ENCODE measurements at regions of chr12 and their contacts with region 1.

Region 1: GRCh38 chr12:57452937-57453509 is 2.1 kb upstream of the INHBE start:
- H3K4me3 ChIP-seq: no peak overlapping the region
- H3K27ac ChIP-seq: no peak overlapping the region
- H3K4me1 ChIP-seq: peaks cover 7% of the 10 kb centered on the region; the same call in 1 of the 2 replicates
- CTCF ChIP-seq: peak; percentile 85

Region 2: DNA sequence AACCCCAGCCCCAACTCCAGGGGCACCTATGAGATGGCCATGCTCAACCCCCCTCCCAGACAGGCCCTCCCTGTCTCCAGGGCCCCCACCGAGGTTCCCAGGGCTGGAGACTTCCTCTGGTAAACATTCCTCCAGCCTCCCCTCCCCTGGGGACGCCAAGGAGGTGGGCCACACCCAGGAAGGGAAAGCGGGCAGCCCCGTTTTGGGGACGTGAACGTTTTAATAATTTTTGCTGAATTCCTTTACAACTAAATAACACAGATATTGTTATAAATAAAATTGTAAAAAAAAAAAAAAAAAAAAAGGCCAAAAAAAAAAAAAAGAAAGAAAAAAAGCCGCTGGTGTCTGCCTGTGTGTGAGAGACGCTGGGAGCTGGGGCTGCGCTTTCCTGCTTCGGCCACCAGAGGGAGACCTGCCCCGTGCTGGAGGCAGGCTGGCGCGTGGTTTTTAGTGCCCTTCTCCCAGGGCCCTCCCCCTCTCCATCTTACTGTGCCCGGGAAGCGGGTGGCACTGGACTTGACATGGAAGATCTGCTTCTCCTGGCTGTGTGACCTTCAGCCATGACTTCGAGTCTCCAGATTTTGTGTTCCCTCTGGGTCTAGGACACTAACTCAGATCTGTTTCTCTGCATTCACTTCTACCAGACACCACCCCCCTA is 239.8 kb before region 1 on chr12:
- CTCF ChIA-PET with region 1: interaction called, 75 read pairs
- POLR2A ChIA-PET with region 1: no interaction called
- H3K4me3 ChIP-seq: no peak overlapping the region
- H3K27ac ChIP-seq: no peak overlapping the region
- H3K4me1 ChIP-seq: peaks cover 5% of the 10 kb centered on the region
- CTCF ChIP-seq: peak; percentile 81

Region 3: DNA sequence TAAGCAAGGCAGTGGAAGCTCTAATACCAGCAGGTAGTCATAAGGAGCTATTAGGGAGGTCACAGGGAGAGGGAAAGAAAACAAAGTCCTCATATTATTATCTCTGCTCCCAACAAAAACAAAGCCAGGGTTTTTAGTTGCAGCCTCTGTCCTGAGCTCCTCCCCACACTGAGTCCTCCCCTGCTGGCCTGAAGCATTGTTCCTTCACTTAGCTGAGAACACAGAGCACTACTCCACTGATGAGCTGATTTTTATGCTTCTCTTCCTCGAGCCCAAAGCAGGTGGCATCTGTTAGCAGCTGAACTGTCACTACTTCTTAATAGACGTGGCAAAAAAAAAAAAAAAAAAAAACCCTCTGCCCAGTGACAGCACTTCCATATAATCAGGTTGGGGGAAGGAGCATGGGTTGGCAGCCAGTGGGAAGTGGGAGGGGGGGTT is 191.6 kb before region 1 on chr12:
- CTCF ChIA-PET with region 1: interaction called, 151 read pairs
- POLR2A ChIA-PET with region 1: interaction called, 5 read pairs
- H3K4me3 ChIP-seq: no peak overlapping the region
- H3K27ac ChIP-seq: no peak overlapping the region
- H3K4me1 ChIP-seq: peaks cover 13% of the 10 kb centered on the region; the same call in 1 of the 2 replicates
- CTCF ChIP-seq: no peak

Region 4: DNA sequence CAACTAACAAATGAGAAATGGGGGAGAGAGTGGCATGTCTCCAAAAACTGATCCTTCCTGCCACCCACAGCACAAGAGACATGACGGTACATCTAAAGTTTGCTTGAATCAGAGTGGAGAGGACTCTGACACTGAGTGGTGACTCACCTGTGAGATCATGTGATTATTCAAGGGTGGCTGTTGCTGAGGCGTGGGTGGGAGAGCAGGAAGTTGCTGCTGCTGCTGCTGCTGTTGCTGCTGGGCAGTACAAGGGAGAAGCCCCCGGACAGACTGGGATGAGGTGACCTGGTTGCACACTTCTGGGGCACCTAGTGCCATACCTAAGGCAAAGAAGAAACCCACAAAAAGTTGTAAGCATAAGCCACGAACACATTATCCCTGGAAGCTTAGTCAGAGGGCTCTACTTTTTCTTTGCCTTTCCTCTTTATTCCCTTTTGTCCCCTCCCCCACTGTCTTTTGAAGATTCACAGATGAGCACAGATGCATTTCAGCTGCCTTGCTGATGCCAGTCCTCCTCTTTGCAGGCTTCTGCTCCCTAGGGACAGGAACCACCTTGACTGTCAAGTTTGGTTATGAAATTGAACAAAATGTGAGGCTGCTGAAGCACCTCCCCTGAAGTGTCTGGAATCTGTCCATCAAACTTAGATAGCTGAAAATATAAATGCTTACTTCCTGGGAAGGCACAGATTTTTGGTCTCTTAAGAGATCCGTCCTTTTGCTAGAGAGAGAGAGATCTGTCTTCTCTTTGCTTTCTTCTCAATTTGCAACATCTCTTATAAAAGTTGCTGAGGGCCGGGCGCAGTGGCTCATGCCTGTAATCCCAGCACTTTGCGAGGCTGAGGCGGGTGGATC is 172.6 kb before region 1 on chr12:
- CTCF ChIA-PET with region 1: interaction called, 17 read pairs
- POLR2A ChIA-PET with region 1: no interaction called
- H3K4me3 ChIP-seq: no peak overlapping the region
- H3K27ac ChIP-seq: no peak overlapping the region
- H3K4me1 ChIP-seq: 0 out of 2 replicates have a peak, but pooled peaks cover 7% of the 10 kb centered on the region
- CTCF ChIP-seq: no peak

Region 5: GRCh38 chr12:57309420-57309819 is 143.6 kb before region 1 on chr12:
- CTCF ChIA-PET with region 1: interaction called, 219 read pairs
- POLR2A ChIA-PET with region 1: interaction called, 5 read pairs
- H3K4me3 ChIP-seq: no peak overlapping the region
- H3K27ac ChIP-seq: no peak overlapping the region
- H3K4me1 ChIP-seq: no peaks in the 10 kb centered on the region; the same call in 1 of the 2 replicates
- CTCF ChIP-seq: no peak

Region 6: DNA sequence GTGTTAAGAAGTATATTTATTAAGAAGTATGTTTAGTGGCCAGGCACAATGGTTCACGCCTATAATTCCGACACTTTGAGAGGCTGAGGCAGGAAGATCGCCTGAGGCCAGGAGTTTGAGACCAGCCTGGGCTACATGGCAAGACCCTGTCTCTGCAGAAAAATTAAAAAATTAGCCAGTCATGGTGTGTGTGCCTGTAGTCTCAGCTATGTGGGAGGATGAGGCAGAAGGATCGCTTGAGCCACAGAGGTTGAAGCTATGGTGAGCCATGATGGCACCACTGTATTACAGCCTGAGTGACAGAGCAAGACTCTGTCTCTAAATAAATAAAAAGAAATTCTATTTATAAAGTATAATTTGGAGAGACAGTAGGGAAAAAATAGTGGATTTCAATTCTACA is 42.5 kb before region 1 on chr12:
- CTCF ChIA-PET with region 1: interaction called, 21 read pairs
- POLR2A ChIA-PET with region 1: no interaction called
- H3K4me3 ChIP-seq: no peak overlapping the region
- H3K27ac ChIP-seq: no peak overlapping the region
- H3K4me1 ChIP-seq: 0 out of 2 replicates have a peak, but pooled peaks cover 2% of the 10 kb centered on the region
- CTCF ChIP-seq: no peak

Region 7: GRCh38 chr12:57865090-57865751 is 412.2 kb after region 1 on chr12:
- CTCF ChIA-PET with region 1: no interaction called
- POLR2A ChIA-PET with region 1: no interaction called
- H3K4me3 ChIP-seq: peak overlapping the region; percentile 37
- H3K27ac ChIP-seq: peak overlapping the region; percentile 62; the same call in 1 of the 2 replicates
- H3K4me1 ChIP-seq: no peaks in the 10 kb centered on the region
- CTCF ChIP-seq: no peak